ENCODE measurements at regions of chrX and their contacts with region 1.

Region 1: DNA sequence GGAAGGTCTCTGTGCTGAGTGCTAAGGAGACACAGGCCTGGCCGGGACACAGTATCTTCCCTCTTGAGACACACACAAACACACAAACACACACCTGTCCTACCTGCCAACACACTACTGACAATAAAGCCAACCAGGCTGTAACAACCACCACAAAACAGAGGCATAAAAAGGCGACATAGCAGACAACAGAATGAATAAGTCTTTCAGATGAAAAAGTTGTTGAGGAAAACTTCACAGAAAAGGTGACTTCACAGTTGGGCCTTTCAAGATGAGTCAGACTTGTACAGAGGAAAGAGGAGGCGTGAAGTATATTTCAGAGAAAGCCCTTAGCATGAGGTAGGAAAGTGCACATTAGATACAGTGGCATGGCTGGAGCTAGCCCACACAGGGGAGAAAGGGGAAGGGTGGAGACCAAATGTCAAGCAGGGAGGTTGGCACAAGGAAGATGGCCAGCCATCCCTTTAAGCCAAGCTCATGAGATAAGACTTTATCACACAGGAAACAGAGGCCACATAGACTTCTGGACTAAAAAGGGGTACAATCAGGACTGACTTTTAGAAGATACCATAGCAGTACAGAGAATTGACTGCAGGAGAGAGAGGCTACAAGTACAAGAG is 54.0 kb downstream of the SLC9A7 start:
- DNase-seq: peak; percentile 32
- H3K4me3 Mint-ChIP-seq: peak overlapping the region; percentile 64
- H3K27ac Mint-ChIP-seq: peak overlapping the region; percentile 88
- H3K4me1 Mint-ChIP-seq: peaks cover 58% of the 10 kb centered on the region
- H3K27me3 Mint-ChIP-seq: no peaks in the 10 kb centered on the region

Region 2: GRCh38 chrX:46446727-46447378 is 258.0 kb before region 1 on chrX:
- intact Hi-C with region 1: loop called (anchors 10 kb)
- DNase-seq: peak; percentile 76
- H3K4me3 Mint-ChIP-seq: peak overlapping the region; percentile 84
- H3K27ac Mint-ChIP-seq: peak overlapping the region; percentile 92
- H3K4me1 Mint-ChIP-seq: peaks cover 25% of the 10 kb centered on the region
- H3K27me3 Mint-ChIP-seq: no peaks in the 10 kb centered on the region

Region 3: DNA sequence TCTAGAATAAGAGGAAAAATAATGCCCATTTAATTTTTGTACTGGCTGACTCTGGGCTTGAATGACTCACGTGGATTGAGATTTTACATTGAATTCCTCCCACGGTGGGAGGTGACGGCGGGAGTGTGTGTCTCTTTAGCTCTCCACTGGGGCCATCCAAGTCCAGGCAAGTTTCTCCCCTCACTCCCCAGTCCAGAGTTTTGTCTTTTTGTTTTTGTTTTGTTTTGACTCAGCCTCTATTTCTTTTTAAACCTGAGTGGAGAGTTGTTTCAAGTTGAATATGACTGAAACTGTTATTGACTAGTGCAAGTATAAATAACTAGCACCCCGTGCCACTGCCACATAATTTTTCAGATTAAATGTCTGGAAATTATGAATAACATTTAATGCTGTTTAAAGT is 117.7 kb before region 1 on chrX:
- intact Hi-C with region 1: loop called (anchors 1 kb)
- DNase-seq: no peak
- H3K4me3 Mint-ChIP-seq: peak overlapping the region; percentile 3
- H3K27ac Mint-ChIP-seq: peak overlapping the region; percentile 70
- H3K4me1 Mint-ChIP-seq: peaks cover 25% of the 10 kb centered on the region
- H3K27me3 Mint-ChIP-seq: no peaks in the 10 kb centered on the region

Measured in activated T-helper 1 cell treated with anti-CD3 and anti-CD28 coated beads, Interleukin-12 subunit alpha, Interleukin-12 subunit beta, Interleukin-2, Interleukin-4 antibody, amounts not matched to agents 30 ng/mL and 10 ng/mL and 1 ng/mL, durations not matched to agents 14 hours and 24 hours and 36 hours (primary cell).